ENCODE measurements at regions of chr5 and their contacts with region 1.

Region 1: DNA sequence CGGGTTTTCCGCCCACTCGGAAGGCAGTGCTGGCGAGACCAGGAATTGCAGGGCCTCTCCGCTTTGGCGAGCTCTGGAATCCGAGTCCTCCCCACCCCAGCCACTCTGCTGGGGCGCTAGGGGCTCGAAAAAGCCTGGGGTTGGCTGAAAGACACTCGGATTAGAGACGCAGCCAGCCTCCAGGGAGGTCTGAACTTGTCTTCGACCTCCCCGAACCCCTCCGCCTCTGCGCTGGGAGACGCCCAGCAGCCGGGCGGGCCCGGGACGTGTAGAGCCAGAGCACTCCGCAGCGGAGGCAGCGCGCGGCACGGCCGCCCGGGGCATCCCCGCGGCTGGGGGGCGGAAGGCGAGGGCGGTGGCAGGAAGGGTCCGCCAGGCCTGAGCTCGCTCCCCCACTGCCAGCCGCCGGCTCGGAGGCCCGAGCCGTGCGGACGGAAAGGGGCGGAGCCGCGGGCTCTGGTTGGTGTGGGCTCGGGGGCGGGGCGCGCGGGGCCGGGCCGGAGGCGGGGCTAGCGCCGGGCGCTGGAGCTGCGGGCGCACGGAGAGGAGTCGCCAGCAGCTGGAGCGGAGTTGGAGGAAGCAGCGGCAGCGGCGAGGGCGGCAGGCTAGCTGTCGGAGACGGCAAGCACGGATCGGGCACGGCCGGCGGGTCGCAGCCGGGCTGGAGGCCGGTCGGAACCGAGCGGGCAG is at the start of gene PIK3R1:
- DNase-seq: peak; percentile 94
- ATAC-seq: peak; percentile 84
- H3K4me3 Mint-ChIP-seq: peak within 1 kb of the TSS; percentile 86
- H3K27ac Mint-ChIP-seq: peak within 1 kb of the TSS; percentile 92
- H3K4me1 Mint-ChIP-seq: peaks cover 41% of the 10 kb centered on the region
- H3K27me3 Mint-ChIP-seq: no peaks in the 10 kb centered on the region
- total RNA-seq, gene PIK3R1: 78.4 to 84.7 TPM

Region 2: GRCh38 chr5:67971223-67971830 is 244.0 kb before region 1 on chr5:
- CTCF ChIA-PET with region 1: no interaction called
- DNase-seq: no peak
- ATAC-seq: no peak
- H3K4me3 Mint-ChIP-seq: no peak overlapping the region
- H3K27ac Mint-ChIP-seq: no peak overlapping the region
- H3K4me1 Mint-ChIP-seq: no peaks in the 10 kb centered on the region
- H3K27me3 Mint-ChIP-seq: no peaks in the 10 kb centered on the region

Region 3: DNA sequence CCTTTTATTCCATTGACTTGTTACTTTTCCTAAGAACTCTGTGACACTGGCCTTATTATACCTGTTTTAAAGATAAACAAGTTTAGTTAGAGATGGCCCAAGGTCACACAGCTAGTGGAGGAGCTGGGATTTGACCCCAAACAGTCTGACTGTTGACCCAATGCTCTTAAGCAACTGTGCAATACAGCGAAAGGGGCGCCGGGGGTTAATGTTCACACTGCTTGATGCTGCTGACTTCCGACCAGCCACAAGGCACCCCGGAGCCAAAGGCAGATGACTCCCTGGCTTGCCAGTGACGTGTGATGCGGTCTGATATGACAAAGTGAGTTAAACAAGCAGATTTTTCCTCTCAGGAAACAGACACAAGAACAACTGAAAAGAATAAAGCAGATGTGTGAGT is 24.1 kb after region 1 on chr5:
- CTCF ChIA-PET with region 1: interaction called, 15 read pairs
- DNase-seq: peak; percentile 92
- ATAC-seq: peak; percentile 94
- H3K4me3 Mint-ChIP-seq: peak overlapping the region; percentile 12
- H3K27ac Mint-ChIP-seq: peak overlapping the region; percentile 77
- H3K4me1 Mint-ChIP-seq: peaks cover 68% of the 10 kb centered on the region
- H3K27me3 Mint-ChIP-seq: no peaks in the 10 kb centered on the region

Region 4: DNA sequence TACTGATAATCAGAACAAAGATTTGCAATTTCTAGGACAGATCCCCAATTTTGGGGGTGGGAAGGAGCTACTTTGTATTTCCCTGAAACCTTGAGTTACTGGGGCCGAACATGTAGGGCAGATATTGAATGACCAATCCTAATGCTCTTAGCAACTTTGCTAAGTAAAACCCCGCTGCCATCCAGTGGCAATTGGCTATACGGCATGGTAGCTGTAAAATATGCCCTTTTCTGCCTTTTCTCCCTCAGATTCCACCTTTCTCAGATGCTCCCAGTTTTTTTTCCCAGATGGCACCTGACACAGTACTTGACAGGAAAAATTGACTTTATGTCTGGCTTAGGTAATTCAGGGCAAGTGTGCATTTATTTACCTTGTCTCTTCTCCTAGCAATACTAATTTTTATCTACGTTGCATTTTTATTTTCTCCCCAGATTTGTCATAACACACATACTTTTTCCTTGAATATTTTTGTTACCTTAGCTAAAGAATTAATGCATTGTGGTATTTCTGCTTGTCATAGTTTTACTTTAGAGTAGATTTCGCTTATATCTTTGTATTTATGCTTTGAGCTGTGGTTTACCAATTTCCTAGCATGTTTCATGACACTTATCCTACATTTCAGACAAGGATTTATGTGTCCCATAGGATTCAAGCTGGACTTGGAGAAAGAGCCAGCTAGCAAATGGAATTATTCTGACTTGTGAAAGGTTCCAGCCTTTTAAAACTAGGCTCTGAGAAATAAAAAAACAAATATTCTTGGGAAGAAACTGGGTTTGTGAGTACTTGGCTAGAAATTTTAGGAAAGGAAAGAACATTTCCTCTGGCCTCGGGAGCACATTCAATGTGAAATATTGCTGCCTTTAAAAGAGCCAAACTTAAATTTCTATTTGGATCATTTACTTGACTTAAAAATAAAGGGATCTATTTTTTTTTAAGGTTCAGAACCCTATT is 37.6 kb after region 1 on chr5:
- CTCF ChIA-PET with region 1: interaction called, 21 read pairs
- DNase-seq: peak; percentile 61
- ATAC-seq: peak; percentile 42
- H3K4me3 Mint-ChIP-seq: no peak overlapping the region
- H3K27ac Mint-ChIP-seq: no peak overlapping the region
- H3K4me1 Mint-ChIP-seq: peaks cover 73% of the 10 kb centered on the region
- H3K27me3 Mint-ChIP-seq: no peaks in the 10 kb centered on the region

Region 5: DNA sequence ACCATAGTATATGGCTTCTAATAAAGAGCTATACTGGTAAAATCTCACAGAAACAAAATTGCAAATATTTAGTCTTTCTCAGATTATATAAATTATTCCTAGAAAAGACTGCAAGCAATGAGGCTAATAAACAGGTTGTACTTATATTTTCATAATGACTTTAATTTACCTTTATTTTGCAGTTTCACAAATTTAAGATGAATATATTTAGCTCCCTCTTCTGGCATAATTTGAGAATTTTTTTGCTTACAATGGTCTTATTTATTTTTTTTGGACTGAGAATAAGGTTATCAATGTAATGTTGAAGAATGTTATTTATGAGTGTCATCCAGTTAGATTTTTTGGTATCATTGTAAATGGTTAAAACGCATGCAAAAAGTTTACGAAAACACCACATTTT is 56.9 kb after region 1 on chr5:
- CTCF ChIA-PET with region 1: interaction called, 27 read pairs
- DNase-seq: no peak
- ATAC-seq: no peak
- H3K4me3 Mint-ChIP-seq: no peak overlapping the region
- H3K27ac Mint-ChIP-seq: peak overlapping the region; percentile 71
- H3K4me1 Mint-ChIP-seq: peaks cover 82% of the 10 kb centered on the region
- H3K27me3 Mint-ChIP-seq: no peaks in the 10 kb centered on the region

Region 6: GRCh38 chr5:68303038-68303738 is 87.8 kb after region 1 on chr5:
- CTCF ChIA-PET with region 1: no interaction called
- DNase-seq: no peak
- ATAC-seq: peak; percentile 48
- H3K4me3 Mint-ChIP-seq: no peak overlapping the region
- H3K27ac Mint-ChIP-seq: peak overlapping the region; percentile 53
- H3K4me1 Mint-ChIP-seq: peaks cover 53% of the 10 kb centered on the region
- H3K27me3 Mint-ChIP-seq: no peaks in the 10 kb centered on the region